ENCODE measurements at regions of chr5 and their contacts with region 1.

Region 1: GRCh38 chr5:10452768-10453331 is 11.2 kb downstream of the ROPN1L start:
- H3K4me3 ChIP-seq: no peak overlapping the region
- H3K27ac ChIP-seq: no peak overlapping the region
- H3K4me1 ChIP-seq: no peaks in the 10 kb centered on the region; the same call in 1 of the 2 replicates
- CTCF ChIP-seq: peak; percentile 74

Region 2: DNA sequence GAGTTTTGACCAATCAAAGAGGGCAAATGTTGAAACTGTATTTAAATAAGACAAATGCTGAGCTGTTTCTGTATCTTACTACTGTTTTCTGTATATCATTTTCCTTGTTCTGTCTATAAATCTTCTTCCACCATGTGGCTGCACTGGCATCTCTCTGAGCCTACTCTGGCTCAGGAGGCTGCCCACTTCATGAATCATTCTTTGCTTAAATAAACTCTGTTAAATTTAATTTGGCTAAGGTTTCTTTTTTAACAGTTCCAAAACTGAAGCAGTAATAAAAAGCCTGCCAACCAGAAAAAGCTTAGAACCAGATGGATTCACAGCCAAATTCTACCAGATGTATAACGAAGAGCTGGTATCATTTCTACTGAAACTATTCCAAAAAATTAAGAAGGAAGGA is 782.5 kb before region 1 on chr5:
- CTCF ChIA-PET with region 1: no interaction called
- POLR2A ChIA-PET with region 1: no interaction called
- H3K4me3 ChIP-seq: no peak overlapping the region
- H3K27ac ChIP-seq: no peak overlapping the region
- H3K4me1 ChIP-seq: no peaks in the 10 kb centered on the region
- CTCF ChIP-seq: no peak

Region 3: DNA sequence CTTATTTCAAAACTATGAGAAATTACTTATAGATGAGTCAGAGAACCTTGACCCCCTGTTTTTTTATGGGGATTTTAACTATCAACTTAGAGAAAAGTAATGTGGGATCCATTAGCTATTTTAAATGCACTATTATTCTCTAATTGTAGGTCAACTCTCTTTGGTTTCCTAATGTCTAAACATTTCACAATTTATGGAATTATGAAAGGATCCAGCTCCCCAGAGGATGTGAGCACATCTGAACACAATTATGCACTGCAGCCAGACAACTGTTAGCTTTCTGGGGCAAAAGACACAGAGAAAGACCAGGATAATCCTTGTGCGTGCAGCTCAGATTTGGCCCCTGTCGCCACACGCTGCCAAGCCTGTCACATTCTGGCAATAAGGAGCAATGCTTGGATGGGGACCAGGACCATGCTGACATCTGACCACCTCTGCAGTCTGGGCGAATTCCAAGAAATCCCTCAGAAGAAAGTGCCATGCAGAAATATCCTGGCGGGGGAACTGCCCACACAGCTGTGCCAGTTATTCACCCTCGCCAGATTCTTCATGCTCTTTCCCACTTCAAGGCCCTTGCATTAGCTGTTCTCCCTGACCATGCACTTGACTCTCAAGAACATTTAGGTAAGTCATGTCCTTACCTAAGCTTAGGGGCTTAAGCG is 122.9 kb before region 1 on chr5:
- CTCF ChIA-PET with region 1: no interaction called
- POLR2A ChIA-PET with region 1: no interaction called
- H3K4me3 ChIP-seq: no peak overlapping the region
- H3K27ac ChIP-seq: no peak overlapping the region
- H3K4me1 ChIP-seq: peaks cover 6% of the 10 kb centered on the region; the same call in 1 of the 2 replicates
- CTCF ChIP-seq: no peak

Region 4: DNA sequence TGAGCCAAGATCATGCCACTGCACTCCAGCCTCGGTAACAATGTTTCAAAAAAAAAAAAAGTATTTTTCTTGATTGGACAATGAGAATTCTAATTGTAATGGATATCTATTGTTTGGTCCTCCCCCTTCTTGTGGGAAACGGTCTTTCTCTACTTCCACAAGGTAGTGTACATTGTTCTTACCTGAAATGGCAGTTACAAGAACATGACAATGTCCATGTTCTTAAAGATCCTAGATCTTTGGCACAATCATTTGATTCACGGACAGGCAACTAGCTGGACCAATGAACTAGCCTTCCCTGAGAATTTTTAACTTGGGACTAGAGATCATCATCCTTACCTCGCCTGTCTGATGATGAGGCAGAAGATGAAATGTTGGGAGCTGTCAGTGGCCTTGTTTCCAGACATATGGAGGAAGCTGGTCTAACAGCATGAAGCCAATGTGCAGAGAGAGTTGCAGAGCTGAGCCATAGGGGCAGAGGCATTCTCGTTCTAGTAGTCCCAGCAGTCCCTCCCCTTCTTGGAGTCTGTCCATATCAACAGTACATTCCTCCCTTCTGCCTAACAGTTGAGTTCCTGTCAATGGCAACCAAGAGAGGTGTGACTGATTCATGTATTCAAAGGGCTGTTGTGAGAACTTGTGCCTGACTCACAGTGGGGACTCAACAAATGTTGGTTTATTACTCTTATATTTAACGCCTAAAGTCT is 101.5 kb before region 1 on chr5:
- CTCF ChIA-PET with region 1: no interaction called
- POLR2A ChIA-PET with region 1: no interaction called
- H3K4me3 ChIP-seq: no peak overlapping the region
- H3K27ac ChIP-seq: no peak overlapping the region
- H3K4me1 ChIP-seq: peaks cover 3% of the 10 kb centered on the region; the same call in 1 of the 2 replicates
- CTCF ChIP-seq: no peak

Region 5: DNA sequence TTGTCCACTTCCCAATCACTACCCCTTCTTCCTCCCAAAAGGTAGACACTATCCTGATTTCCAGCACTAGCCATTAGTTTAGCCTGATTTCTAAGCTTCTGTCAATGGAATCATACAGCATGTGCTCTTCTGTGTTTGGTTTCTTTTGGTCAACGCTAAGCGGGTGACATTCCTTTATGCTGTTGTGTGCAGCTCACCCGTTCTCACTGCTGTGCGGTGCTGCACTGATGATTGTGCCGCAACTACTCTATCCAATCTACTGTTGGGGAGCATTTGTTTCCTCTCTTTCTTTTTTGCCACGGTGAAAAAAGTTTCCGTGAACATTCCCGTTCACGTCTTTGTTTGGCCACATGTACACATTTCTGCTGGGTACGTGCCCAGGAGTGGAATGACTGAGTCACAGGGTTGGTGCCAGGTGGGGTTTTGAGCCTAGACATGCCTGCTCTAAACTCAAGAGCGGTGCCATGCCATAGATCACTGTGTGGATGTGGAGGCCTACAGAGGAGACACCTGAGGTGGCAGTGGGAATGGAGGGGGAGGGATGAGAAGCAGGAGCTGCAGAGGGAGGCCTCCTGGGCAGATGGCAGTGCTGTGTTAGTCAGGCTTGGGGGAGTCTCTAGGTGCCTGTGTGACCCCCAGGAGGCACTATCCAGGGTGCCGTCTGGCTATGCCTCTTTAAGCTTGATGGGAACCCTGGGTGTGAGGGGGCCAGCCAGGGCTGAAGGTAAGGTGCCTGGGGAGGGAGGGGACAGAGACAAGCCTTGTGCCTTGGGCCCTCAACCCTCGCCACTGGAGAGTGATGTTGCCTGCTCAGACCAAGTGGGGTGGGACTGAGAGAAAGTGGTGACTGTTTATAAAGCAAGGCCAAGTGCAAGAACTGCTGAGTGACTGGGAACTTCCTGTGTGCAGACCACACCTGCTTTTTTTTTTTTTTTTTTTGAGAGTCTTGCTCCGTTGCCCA is 99.6 kb after region 1 on chr5:
- CTCF ChIA-PET with region 1: interaction called, 18 read pairs
- POLR2A ChIA-PET with region 1: no interaction called
- H3K4me3 ChIP-seq: no peak overlapping the region
- H3K27ac ChIP-seq: no peak overlapping the region
- H3K4me1 ChIP-seq: peaks cover 19% of the 10 kb centered on the region
- CTCF ChIP-seq: no peak

Region 6: DNA sequence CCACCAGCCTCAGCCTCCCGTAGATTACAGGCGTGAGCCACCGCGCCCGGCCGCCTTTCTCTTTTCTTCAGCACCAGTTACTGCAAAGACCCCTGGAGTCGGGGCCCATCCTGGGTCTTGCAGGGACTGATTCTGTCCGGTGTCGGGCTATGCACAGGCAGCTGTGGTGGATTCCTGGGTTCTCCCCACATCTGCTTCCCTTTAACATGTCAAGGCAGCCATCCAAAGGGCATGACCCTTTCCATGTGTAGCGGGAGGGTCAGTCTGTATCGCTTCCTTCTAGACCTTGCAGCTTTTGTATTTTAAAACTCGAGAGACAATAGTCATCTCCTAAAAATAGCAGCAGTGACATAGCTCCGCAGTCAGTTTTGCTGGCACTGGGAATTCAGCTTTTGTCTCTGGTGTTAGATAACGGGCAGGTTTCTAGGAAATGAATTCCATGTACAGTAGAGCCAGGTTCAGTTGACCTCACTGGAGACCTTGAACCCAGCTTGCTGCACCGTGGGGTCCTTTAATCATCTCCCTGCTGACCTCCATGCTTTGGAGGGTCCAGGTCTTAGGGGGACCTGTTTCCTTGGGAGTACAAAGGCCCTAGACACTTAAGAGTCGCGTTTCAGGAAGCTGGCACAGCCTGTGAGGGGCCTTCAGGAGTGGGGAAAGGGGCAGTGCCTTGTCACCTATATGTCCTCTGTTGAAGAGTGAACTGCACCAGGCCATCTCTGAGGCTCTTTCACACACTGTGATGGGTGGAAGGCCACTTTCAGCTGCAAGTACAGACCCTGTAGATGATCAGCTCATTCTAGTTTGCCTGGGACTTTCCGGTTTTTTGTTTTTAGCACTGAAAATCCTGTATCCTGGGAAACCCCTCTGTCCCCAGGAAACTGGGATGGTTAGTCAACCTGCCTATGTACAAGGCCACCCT is 124.8 kb after region 1 on chr5:
- CTCF ChIA-PET with region 1: interaction called, 12 read pairs
- POLR2A ChIA-PET with region 1: no interaction called
- H3K4me3 ChIP-seq: no peak overlapping the region
- H3K27ac ChIP-seq: no peak overlapping the region
- H3K4me1 ChIP-seq: peaks cover 3% of the 10 kb centered on the region; the same call in 1 of the 2 replicates
- CTCF ChIP-seq: no peak

Region 7: GRCh38 chr5:10607666-10608073 is 154.8 kb after region 1 on chr5:
- CTCF ChIA-PET with region 1: interaction called, 15 read pairs
- POLR2A ChIA-PET with region 1: no interaction called
- H3K4me3 ChIP-seq: no peak overlapping the region
- H3K27ac ChIP-seq: peak overlapping the region; percentile 54
- H3K4me1 ChIP-seq: peaks cover 10% of the 10 kb centered on the region
- CTCF ChIP-seq: no peak

Region 8: DNA sequence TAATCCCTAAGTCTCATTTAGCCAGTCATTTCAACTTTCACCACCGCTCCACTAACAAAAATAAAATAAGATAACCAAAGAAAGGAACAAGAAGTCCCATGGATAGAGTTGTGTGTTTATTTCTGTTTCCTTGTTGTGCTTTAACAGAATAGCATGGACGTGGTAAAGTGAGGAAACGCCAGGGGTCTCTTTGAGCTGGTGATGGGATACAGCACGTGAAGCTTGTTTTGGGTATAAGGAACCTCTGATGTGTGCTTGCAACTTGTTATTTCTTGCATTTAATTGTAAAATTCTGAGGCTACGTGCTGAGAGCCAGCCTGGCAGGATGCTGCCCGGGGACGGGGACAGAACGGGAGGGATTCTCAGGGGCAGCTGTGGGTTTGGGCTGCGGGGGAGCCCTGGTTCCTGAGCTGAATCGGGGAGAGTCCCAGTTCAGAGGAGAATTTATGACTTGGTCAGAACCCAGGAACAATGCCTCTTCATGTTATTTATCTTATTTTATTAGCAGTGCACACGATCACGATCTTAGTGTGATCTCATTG is 174.4 kb after region 1 on chr5:
- CTCF ChIA-PET with region 1: interaction called, 175 read pairs
- POLR2A ChIA-PET with region 1: interaction called, 4 read pairs
- H3K4me3 ChIP-seq: no peak overlapping the region
- H3K27ac ChIP-seq: peak overlapping the region; percentile 50; the same call in 1 of the 2 replicates
- H3K4me1 ChIP-seq: peaks cover 7% of the 10 kb centered on the region
- CTCF ChIP-seq: no peak

Region 9: DNA sequence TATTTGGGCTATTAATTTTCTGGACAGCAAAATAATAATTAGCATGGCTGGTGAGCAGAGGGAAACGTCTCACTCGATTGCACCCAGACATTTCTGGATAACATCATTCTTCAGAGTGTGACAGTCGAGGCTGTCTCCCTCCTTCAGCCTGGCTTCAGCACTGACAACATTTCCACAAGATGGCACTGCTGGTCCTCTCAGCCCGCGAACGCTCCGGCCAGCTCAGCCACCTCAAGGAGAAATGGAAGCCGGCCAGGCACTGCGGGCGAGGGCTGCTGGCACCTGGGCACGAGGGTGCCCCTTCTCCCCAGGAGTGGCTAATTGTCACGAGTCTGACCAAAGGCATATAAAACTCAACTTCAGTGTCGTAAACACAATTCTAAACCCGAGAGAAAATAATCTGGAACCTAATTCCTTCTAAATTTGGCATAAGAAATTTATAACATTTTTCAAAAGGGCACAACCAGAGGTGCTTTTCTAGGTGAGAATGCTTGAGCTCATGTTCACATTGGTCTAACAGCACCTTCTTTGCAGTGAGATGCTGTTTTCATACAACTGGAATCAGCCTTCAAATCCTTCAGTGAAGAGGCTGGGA is 242.3 kb after region 1 on chr5:
- CTCF ChIA-PET with region 1: interaction called, 101 read pairs
- POLR2A ChIA-PET with region 1: no interaction called
- H3K4me3 ChIP-seq: no peak overlapping the region
- H3K27ac ChIP-seq: no peak overlapping the region
- H3K4me1 ChIP-seq: no peaks in the 10 kb centered on the region
- CTCF ChIP-seq: peak; percentile 79

Region 10: DNA sequence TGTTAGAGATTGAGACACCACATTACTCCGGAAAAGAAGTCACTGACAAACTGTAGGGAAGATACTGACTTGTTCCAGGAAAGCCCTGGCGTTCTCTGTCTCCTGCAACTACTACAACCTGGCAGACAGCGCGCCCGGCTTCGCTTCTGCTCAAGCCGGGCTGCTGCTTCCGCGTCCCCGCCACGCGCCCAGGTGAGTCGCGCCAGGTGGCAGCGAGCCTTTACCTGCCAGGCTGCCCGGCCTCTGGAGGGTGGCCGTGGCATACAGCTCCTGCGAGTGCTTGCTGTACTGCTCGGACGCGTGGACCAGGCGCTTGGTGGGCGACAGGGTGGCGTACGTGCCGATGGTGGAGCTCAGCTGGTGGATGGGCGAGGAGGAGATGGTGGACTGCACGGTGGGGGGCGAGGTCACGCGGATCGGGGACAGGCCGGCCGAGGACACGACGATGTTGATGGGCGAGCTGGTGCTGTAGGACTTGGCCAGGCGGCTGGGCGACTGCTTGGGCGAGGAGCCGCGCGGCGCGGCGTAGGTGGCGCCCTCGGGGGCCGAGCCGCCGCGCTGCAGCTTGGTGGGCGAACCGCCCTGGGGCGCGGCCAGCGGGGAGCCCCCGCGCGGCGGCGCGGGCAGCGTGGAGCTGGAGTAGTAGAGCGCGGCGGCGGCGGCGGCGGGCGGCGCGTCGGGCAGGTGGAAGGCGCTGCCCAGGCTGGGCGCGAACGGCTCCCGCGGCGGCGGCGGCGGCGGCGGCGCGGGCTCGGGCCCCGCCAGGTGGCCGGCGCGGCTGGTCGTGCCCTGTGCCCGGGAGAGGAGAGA is 931.8 kb after region 1 on chr5:
- CTCF ChIA-PET with region 1: no interaction called
- POLR2A ChIA-PET with region 1: no interaction called
- H3K4me3 ChIP-seq: peak overlapping the region; percentile 51
- H3K27ac ChIP-seq: no peak overlapping the region
- H3K4me1 ChIP-seq: no peaks in the 10 kb centered on the region
- CTCF ChIP-seq: no peak

Measured in HEK293 (cell line).